Heart right ventricle (tissue), 16 donors: ENCODE measurements at regions of chr10 and their contacts with region 1.

Region 1: GRCh38 chr10:52215745-52216361 is 98.2 kb upstream of the DKK1 start:
- DNase-seq: peak in 1 of 2 donors; percentile 52
- ATAC-seq: peak in 7 of 8 donors; percentile 41 to 77 (median 67)
- H3K4me3 ChIP-seq: no peak overlapping the region
- H3K27ac ChIP-seq: no peak overlapping the region
- H3K4me1 ChIP-seq: peaks cover 0 to 23% (median 4%) of the 10 kb centered on the region in 9 donors
- H3K27me3 ChIP-seq: no peaks in the 10 kb centered on the region
- CTCF ChIP-seq: peak; percentile 53 to 82 (median 74)

Region 2: DNA sequence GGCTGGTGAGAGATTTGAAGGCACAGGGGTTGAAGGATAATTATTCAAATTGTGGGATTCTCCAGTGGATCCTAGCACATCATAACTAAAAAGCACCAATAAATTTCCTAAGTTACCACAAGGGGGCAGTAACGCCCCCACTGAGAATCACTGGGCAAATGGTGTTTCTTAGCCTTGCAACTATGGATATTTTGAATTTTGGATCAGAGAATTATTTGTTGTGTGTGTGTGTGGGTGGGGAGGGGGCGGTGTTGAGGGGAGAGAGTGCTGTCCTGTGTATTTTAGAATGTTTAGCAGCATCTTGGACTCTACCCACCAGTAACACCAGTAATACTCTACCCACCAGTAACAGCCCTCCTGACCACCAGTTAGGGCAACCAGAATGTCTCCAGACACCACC is 1204.9 kb before region 1 on chr10:
- intact Hi-C with region 1: loop called in 4 of 10 experiments (anchors 5 to 10 kb)
- DNase-seq: no peak
- ATAC-seq: peak in 3 of 8 donors; percentile 27 to 54 (median 46)
- H3K4me3 ChIP-seq: no peak overlapping the region
- H3K27ac ChIP-seq: no peak overlapping the region
- H3K4me1 ChIP-seq: peaks cover 0 to 25% (median 6%) of the 10 kb centered on the region in 9 donors
- H3K27me3 ChIP-seq: no peaks in the 10 kb centered on the region
- CTCF ChIP-seq: peak; percentile 59 to 81 (median 73)

Region 3: GRCh38 chr10:51389415-51390321 is 826.2 kb before region 1 on chr10:
- intact Hi-C with region 1: loop called in 1 of 10 experiments (anchors 10 kb)
- DNase-seq: peak; percentile 16 to 18
- ATAC-seq: peak; percentile 38 to 78 (median 72)
- H3K4me3 ChIP-seq: no peak overlapping the region
- H3K27ac ChIP-seq: peak overlapping the region in 3 of 10 donors; percentile 2 to 33 (median 10)
- H3K4me1 ChIP-seq: peaks cover 0 to 26% (median 14%) of the 10 kb centered on the region in 9 donors
- H3K27me3 ChIP-seq: no peaks in the 10 kb centered on the region
- CTCF ChIP-seq: peak; percentile 46 to 86 (median 78)

Region 4: GRCh38 chr10:51879238-51879637 is 336.6 kb before region 1 on chr10:
- intact Hi-C with region 1: no loop called
- DNase-seq: peak in 1 of 2 donors; percentile 22
- ATAC-seq: peak; percentile 78 to 97 (median 86)
- H3K4me3 ChIP-seq: no peak overlapping the region
- H3K27ac ChIP-seq: peak overlapping the region in 9 of 10 donors; percentile 34 to 77 (median 51)
- H3K4me1 ChIP-seq: peaks cover 0 to 40% (median 26%) of the 10 kb centered on the region in 9 donors
- H3K27me3 ChIP-seq: no peaks in the 10 kb centered on the region
- CTCF ChIP-seq: no peak

Region 5: DNA sequence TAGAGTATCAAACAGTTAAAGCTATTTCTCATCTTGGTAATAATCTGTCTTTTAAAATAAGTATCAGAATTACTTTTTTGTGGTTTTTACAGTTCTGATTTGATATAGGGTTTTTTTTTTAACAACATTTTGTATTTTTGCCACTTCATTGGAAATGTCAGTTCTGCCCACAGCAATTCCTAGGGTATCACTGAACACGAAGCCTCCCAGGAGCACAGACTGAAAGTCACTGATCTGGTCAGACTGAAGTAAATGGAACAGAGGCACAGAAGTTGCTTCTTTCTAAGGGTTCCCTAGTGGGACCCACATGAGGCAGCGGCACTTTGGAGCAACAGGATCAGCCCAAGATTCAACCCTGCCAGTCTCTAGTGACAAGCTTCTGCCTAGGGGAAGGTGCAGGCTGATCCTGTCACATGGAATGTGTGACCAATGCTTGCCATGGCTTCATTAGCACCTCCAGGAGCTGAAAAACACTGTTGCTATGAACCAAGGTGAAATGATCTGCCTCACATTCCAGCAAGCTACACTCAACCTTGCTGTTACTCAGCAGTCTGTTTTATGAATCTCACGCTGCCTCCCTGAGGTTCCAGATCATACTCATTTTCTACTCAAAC is 243.0 kb before region 1 on chr10:
- intact Hi-C with region 1: loop called in 2 of 10 experiments (anchors 10 kb)
- DNase-seq: no peak
- ATAC-seq: peak in 3 of 8 donors; percentile 43 to 88 (median 73)
- H3K4me3 ChIP-seq: no peak overlapping the region
- H3K27ac ChIP-seq: peak overlapping the region in 1 of 10 donors; percentile 24
- H3K4me1 ChIP-seq: no peaks in the 10 kb centered on the region
- H3K27me3 ChIP-seq: no peaks in the 10 kb centered on the region
- CTCF ChIP-seq: no peak

Region 6: GRCh38 chr10:53153831-53154230 is 938.0 kb after region 1 on chr10:
- intact Hi-C with region 1: no loop called
- DNase-seq: no peak
- ATAC-seq: no peak
- H3K4me3 ChIP-seq: no peak overlapping the region
- H3K27ac ChIP-seq: no peak overlapping the region
- H3K4me1 ChIP-seq: no peaks in the 10 kb centered on the region
- H3K27me3 ChIP-seq: no peaks in the 10 kb centered on the region
- CTCF ChIP-seq: no peak